HepG2 (cell line): ENCODE measurements at regions of chr4 and their contacts with region 1.

Region 1: GRCh38 chr4:138919094-138919936 is 96.3 kb upstream of the NOCT start:
- DNase-seq: peak; percentile 49
- ATAC-seq: peak; percentile 99
- H3K4me3 ChIP-seq: no peak overlapping the region
- H3K27ac ChIP-seq: no peak overlapping the region
- H3K4me1 ChIP-seq: no peaks in the 10 kb centered on the region
- H3K27me3 ChIP-seq: no peaks in the 10 kb centered on the region
- CTCF ChIP-seq: peak; percentile 87
- EP300 ChIP-seq: no peak
- POLR2A ChIP-seq: no peak
- RAD21 ChIP-seq: peak; percentile 63

Region 2: DNA sequence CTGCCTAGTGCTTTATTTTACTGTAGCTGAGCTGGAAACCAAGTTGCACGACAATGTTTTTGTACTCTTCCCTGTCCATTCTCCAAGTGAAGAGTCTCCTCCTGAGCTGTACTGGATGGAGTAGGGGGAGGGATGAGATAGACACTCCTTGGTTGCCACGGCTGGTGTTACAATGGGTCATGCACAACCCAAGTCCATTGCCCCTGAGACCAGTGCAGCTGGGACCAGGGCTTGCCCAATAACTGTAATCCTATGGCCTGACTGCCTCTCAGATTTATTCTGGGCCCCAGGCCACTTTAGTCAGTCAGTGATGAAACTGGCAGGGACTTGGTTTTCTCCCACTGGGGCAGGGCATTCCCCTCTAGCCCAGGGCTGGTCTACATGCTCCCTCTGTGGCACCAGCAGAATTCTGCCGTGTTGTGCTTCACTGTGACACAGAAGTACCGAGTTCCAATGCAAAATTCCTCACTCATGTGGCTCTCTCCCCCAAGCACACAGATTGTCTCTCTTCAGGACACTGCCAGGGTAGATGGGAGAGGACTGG is 1183.7 kb before region 1 on chr4:
- CTCF ChIA-PET with region 1: no interaction called
- POLR2A ChIA-PET with region 1: no interaction called
- in situ Hi-C with region 1: no loop called
- intact Hi-C with region 1: loop called (anchors 5 kb)
- DNase-seq: no peak
- ATAC-seq: peak; percentile 27; the same call in 1 of the 3 replicates
- H3K4me3 ChIP-seq: no peak overlapping the region
- H3K27ac ChIP-seq: no peak overlapping the region
- H3K4me1 ChIP-seq: no peaks in the 10 kb centered on the region
- H3K27me3 ChIP-seq: no peaks in the 10 kb centered on the region
- CTCF ChIP-seq: no peak
- EP300 ChIP-seq: no peak
- POLR2A ChIP-seq: no peak
- RAD21 ChIP-seq: no peak